Naive thymus-derived CD4-positive, alpha-beta T cell (primary cell): ENCODE measurements at regions of chr19 and their contacts with region 1.

Region 1: GRCh38 chr19:19643158-19644053 is at the start of gene GMIP:
- DNase-seq: peak; percentile 82 to 91 (median 88)
- ATAC-seq: peak; percentile 94
- H3K4me3 ChIP-seq: peak within 1 kb of the TSS; percentile 82
- H3K4me3 Mint-ChIP-seq: peak within 1 kb of the TSS; percentile 93 to 100 (median 98)
- H3K27ac ChIP-seq: peak within 1 kb of the TSS; percentile 89
- H3K27ac Mint-ChIP-seq: peak within 1 kb of the TSS; percentile 88 to 98 (median 97)
- H3K4me1 ChIP-seq: peaks cover 10 to 18% of the 10 kb centered on the region in 2 donors
- H3K4me1 Mint-ChIP-seq: peaks cover 12 to 25% (median 18%) of the 10 kb centered on the region in 7 donors
- H3K27me3 ChIP-seq: no peaks in the 10 kb centered on the region
- H3K27me3 Mint-ChIP-seq: no peaks in the 10 kb centered on the region
- total RNA-seq, gene GMIP: 97.2 to 141 (median 109) TPM

Region 2: DNA sequence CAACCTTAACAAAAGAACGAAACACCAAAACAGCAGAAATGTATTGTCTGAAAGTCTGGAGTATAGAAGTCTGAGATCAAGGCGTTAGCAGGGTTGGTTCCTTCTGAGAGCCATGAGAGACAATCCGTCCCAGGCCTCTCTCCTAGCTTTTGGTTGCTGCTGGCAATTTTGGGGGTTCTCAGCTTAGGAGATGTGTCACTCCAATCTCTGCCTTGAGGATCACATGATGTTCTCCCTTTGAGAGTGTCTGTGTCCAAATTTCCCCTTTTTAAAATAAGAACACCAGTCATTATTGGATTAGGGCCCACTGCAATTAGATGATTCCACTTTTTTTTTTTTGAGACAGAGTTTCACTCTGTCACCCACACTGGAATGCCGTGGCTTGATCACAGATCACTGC is 1666.4 kb before region 1 on chr19:
- CTCF ChIA-PET with region 1: no interaction called
- POLR2A ChIA-PET with region 1: no interaction called
- intact Hi-C with region 1: no loop called
- DNase-seq: no peak
- ATAC-seq: no peak
- H3K4me3 ChIP-seq: no peak overlapping the region
- H3K4me3 Mint-ChIP-seq: no peak overlapping the region
- H3K27ac ChIP-seq: no peak overlapping the region
- H3K27ac Mint-ChIP-seq: no peak overlapping the region
- H3K4me1 ChIP-seq: no peaks in the 10 kb centered on the region
- H3K4me1 Mint-ChIP-seq: peaks cover 0 to 6% (median 0%) of the 10 kb centered on the region in 7 donors
- H3K27me3 ChIP-seq: no peaks in the 10 kb centered on the region
- H3K27me3 Mint-ChIP-seq: peaks cover 5 to 22% (median 10%) of the 10 kb centered on the region in 5 donors

Region 3: GRCh38 chr19:19385108-19385899 is 258.1 kb before region 1 on chr19:
- CTCF ChIA-PET with region 1: no interaction called
- POLR2A ChIA-PET with region 1: no interaction called
- intact Hi-C with region 1: loop called in 1 of 2 experiments (anchors 5 kb)
- DNase-seq: peak; percentile 95 to 100 (median 99)
- ATAC-seq: peak; percentile 93
- H3K4me3 ChIP-seq: peak overlapping the region; percentile 81
- H3K4me3 Mint-ChIP-seq: peak overlapping the region; percentile 89 to 99 (median 94)
- H3K27ac ChIP-seq: peak overlapping the region; percentile 88
- H3K27ac Mint-ChIP-seq: peak overlapping the region; percentile 25 to 96 (median 93)
- H3K4me1 ChIP-seq: peaks cover 29 to 42% of the 10 kb centered on the region in 2 donors
- H3K4me1 Mint-ChIP-seq: peaks cover 36 to 46% (median 42%) of the 10 kb centered on the region in 7 donors
- H3K27me3 ChIP-seq: no peaks in the 10 kb centered on the region
- H3K27me3 Mint-ChIP-seq: no peaks in the 10 kb centered on the region

Region 4: GRCh38 chr19:19420570-19421298 is 222.7 kb before region 1 on chr19:
- CTCF ChIA-PET with region 1: no interaction called
- POLR2A ChIA-PET with region 1: no interaction called
- intact Hi-C with region 1: no loop called
- DNase-seq: no peak
- ATAC-seq: peak; percentile 89
- H3K4me3 ChIP-seq: no peak overlapping the region
- H3K4me3 Mint-ChIP-seq: peak overlapping the region in 9 of 10 donors; percentile 20 to 71 (median 51)
- H3K27ac ChIP-seq: no peak overlapping the region
- H3K27ac Mint-ChIP-seq: peak overlapping the region in 8 of 9 donors; percentile 39 to 86 (median 70)
- H3K4me1 ChIP-seq: peaks cover 40 to 49% of the 10 kb centered on the region in 2 donors
- H3K4me1 Mint-ChIP-seq: peaks cover 48 to 94% (median 80%) of the 10 kb centered on the region in 7 donors
- H3K27me3 ChIP-seq: no peaks in the 10 kb centered on the region
- H3K27me3 Mint-ChIP-seq: no peaks in the 10 kb centered on the region

Region 5: DNA sequence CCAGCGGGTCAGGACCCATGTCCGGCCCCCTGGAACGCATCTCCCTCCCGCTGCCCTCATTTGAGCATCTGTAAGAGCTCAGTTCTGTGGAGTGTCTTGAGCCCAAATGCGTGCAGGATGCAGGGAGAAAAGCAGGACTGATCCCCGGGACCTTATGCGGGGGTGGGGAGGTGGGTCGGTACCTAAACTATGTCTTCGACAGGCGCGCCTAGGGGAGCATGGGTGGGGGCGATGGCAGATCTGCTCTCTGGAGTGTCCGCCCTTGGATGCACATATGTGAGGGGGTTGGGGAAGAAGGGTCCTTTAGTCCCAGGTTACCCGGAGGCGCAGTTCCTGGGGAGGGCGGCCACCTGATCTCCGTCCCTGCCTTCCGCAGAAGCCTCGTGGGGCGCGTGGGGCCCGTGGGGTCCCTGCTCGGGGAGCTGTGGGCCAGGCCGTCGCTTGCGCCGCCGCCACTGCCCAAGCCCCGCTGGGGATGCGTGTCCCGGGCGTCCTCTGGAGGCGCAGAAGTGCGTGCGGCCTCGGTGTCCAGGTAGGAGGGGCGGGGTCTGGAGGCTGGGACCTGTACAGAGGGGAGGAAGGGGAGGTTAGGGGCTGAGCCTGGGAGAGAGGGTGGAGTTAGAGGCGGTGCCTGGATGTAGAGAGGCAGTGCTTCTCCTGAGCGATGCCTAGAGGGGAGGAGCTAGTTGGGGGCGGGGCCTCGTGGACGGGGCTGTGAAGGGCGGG is 102.5 kb before region 1 on chr19:
- CTCF ChIA-PET with region 1: no interaction called
- POLR2A ChIA-PET with region 1: no interaction called
- intact Hi-C with region 1: loop called in 1 of 2 experiments (anchors 1 kb)
- DNase-seq: peak; percentile 49 to 79 (median 69)
- ATAC-seq: peak; percentile 86
- H3K4me3 ChIP-seq: peak overlapping the region; percentile 50
- H3K4me3 Mint-ChIP-seq: peak overlapping the region; percentile 58 to 85 (median 77)
- H3K27ac ChIP-seq: no peak overlapping the region
- H3K27ac Mint-ChIP-seq: peak overlapping the region in 3 of 9 donors; percentile 43 to 81 (median 66)
- H3K4me1 ChIP-seq: peaks cover 15 to 25% of the 10 kb centered on the region in 2 donors
- H3K4me1 Mint-ChIP-seq: peaks cover 8 to 36% (median 29%) of the 10 kb centered on the region in 7 donors
- H3K27me3 ChIP-seq: no peaks in the 10 kb centered on the region
- H3K27me3 Mint-ChIP-seq: peaks cover 0 to 31% (median 4%) of the 10 kb centered on the region in 5 donors

Region 6: DNA sequence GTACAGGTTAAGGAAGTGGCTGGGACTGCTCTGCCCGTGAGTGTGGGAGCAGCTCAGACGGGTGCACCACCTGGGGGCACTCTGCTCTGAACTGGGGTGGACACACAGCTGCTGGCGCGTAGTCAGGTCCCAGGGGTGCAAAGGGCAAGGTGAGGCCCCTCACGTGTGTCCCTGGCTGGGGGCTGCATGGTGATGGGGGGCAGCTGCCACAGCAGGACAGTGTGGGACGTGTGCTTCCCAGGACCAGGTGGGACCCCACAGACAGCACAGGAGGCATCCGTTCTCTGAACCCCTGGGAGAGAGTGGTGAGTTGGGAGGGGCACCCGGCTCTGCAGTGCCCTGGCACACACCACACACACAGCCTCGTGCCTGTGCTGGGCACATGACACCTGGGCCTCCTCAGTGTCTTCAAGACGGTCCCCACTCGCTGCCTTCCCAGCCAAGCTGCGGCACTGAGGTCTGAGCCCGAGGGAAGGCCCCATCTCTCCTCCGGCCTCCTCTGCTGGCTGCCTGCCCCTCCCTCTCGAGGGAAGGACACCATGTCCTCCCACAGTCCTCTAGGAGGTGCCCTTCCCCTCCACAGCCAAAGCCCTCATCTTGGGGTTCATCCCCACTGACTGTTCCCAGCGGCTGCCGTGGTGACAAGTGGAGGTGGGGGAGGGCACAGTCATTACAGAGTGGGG is 80.6 kb before region 1 on chr19:
- CTCF ChIA-PET with region 1: interaction called, 8 read pairs
- POLR2A ChIA-PET with region 1: interaction called, 8 read pairs
- intact Hi-C with region 1: loop called in 1 of 2 experiments (anchors 1 kb)
- DNase-seq: peak in 7 of 9 donors; percentile 28 to 61 (median 46)
- ATAC-seq: peak; percentile 81
- H3K4me3 ChIP-seq: no peak overlapping the region
- H3K4me3 Mint-ChIP-seq: peak overlapping the region in 1 of 10 donors; percentile 13
- H3K27ac ChIP-seq: no peak overlapping the region
- H3K27ac Mint-ChIP-seq: peak overlapping the region; percentile 36 to 78 (median 52)
- H3K4me1 ChIP-seq: peaks cover 0 to 18% of the 10 kb centered on the region in 2 donors
- H3K4me1 Mint-ChIP-seq: peaks cover 20 to 40% (median 29%) of the 10 kb centered on the region in 7 donors
- H3K27me3 ChIP-seq: no peaks in the 10 kb centered on the region
- H3K27me3 Mint-ChIP-seq: no peaks in the 10 kb centered on the region

Region 7: GRCh38 chr19:19578252-19578651 is 65.2 kb before region 1 on chr19:
- CTCF ChIA-PET with region 1: no interaction called
- POLR2A ChIA-PET with region 1: no interaction called
- intact Hi-C with region 1: no loop called
- DNase-seq: no peak
- ATAC-seq: no peak
- H3K4me3 ChIP-seq: no peak overlapping the region
- H3K4me3 Mint-ChIP-seq: no peak overlapping the region
- H3K27ac ChIP-seq: no peak overlapping the region
- H3K27ac Mint-ChIP-seq: no peak overlapping the region
- H3K4me1 ChIP-seq: no peaks in the 10 kb centered on the region
- H3K4me1 Mint-ChIP-seq: peaks cover 7 to 36% (median 24%) of the 10 kb centered on the region in 7 donors
- H3K27me3 ChIP-seq: no peaks in the 10 kb centered on the region
- H3K27me3 Mint-ChIP-seq: no peaks in the 10 kb centered on the region

Region 8: GRCh38 chr19:19606021-19606420 is 37.4 kb before region 1 on chr19:
- CTCF ChIA-PET with region 1: interaction called, 5 read pairs
- POLR2A ChIA-PET with region 1: interaction called, 3 read pairs
- intact Hi-C with region 1: loop called in 1 of 2 experiments (anchors 1 kb)
- DNase-seq: peak in 7 of 9 donors; percentile 33 to 83 (median 61)
- ATAC-seq: peak; percentile 83
- H3K4me3 ChIP-seq: no peak overlapping the region
- H3K4me3 Mint-ChIP-seq: peak overlapping the region; percentile 42 to 76 (median 71)
- H3K27ac ChIP-seq: peak overlapping the region; percentile 46
- H3K27ac Mint-ChIP-seq: peak overlapping the region; percentile 66 to 96 (median 91)
- H3K4me1 ChIP-seq: peaks cover 42 to 54% of the 10 kb centered on the region in 2 donors
- H3K4me1 Mint-ChIP-seq: peaks cover 29 to 66% (median 55%) of the 10 kb centered on the region in 7 donors
- H3K27me3 ChIP-seq: no peaks in the 10 kb centered on the region
- H3K27me3 Mint-ChIP-seq: no peaks in the 10 kb centered on the region

Region 9: DNA sequence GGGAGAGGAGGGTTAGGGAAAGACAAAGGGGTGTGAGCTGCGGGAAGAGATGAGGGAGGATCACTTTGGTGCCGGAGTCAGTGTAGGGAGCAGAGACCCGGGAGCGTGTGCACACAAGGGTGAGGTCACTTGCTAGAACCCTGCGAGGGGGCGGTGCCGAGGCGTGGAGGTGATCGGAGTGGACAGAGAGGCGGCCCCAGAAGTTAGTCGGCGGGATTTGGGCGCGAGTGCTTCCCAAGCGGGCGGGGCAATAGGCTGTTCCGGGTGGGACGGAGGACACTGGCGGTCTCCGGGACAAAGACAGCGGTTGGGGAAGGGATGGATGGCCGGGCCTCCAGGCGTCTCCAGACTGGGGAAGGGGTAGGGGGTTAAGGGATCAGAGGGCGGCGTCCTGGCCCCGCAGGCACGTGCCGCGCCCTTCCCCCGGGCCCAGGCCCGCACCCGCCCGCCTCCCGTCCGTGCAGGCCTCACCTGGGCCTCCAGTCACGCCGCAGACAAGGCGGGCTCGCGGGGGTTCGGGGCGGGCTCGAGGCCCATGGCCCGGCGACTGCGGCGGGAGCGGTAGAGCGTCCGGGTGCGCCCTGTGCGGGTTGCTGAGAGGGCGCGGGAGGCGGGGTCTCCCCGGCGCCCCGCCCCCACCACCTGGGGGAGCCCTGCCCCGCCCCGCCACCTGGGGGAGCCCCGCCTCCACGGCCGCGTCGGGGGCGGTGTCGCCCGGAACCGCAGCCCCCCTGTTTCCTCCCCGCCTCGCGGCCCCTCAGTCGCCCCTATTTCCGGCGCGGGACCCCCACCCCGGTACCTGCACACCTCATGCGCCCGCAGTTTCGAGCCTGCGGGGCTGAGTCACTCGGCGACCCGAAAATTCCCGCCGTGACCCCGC is 15.5 kb before region 1 on chr19 and contains the start of gene LPAR2:
- CTCF ChIA-PET with region 1: no interaction called
- POLR2A ChIA-PET with region 1: interaction called, 12 read pairs
- intact Hi-C with region 1: loop called (anchors 1 kb)
- DNase-seq: peak; percentile 73 to 90 (median 82)
- ATAC-seq: peak; percentile 95
- H3K4me3 ChIP-seq: peak within 1 kb of the TSS; percentile 79
- H3K4me3 Mint-ChIP-seq: peak within 1 kb of the TSS; percentile 91 to 100 (median 96)
- H3K27ac ChIP-seq: peak within 1 kb of the TSS; percentile 92
- H3K27ac Mint-ChIP-seq: peak within 1 kb of the TSS; percentile 86 to 98 (median 95)
- H3K4me1 ChIP-seq: peaks cover 6 to 18% of the 10 kb centered on the region in 2 donors
- H3K4me1 Mint-ChIP-seq: peaks cover 17 to 32% (median 27%) of the 10 kb centered on the region in 7 donors
- H3K27me3 ChIP-seq: no peaks in the 10 kb centered on the region
- H3K27me3 Mint-ChIP-seq: no peaks in the 10 kb centered on the region
- total RNA-seq, gene LPAR2: 64.4 to 91.7 (median 75.0) TPM